ENCODE measurements at regions of chr16 and their contacts with region 1.

Region 1: GRCh38 chr16:56317998-56318826 is 107.1 kb downstream of the AMFR start:
- DNase-seq: peak; percentile 91
- ATAC-seq: peak; percentile 96

Region 2: DNA sequence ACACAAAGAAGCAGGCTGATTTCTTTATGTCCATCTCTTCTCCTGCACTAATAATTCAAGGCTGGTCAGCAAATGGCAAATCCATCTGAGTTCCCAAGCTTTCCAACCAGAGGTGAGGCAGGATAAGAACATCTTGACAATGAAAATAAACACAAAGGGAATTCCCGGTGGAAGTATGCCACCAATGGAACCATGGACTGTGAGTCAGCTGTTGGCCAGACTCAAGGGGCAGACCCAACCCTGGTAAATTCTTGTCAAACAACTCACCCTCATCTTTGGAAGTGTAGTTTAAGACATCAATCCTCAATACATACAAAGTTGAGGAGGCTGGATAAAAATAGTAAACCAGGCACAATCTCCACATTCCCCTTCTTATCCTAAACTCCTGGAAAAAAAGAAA is 368.7 kb before region 1 on chr16:
- intact Hi-C with region 1: loop called (anchors 5 kb)
- DNase-seq: no peak
- ATAC-seq: no peak

Measured in sciatic nerve (tissue), 2 donors.